GM23248 (cell line): ENCODE measurements at regions of chr16 and their contacts with region 1.

Region 1: DNA sequence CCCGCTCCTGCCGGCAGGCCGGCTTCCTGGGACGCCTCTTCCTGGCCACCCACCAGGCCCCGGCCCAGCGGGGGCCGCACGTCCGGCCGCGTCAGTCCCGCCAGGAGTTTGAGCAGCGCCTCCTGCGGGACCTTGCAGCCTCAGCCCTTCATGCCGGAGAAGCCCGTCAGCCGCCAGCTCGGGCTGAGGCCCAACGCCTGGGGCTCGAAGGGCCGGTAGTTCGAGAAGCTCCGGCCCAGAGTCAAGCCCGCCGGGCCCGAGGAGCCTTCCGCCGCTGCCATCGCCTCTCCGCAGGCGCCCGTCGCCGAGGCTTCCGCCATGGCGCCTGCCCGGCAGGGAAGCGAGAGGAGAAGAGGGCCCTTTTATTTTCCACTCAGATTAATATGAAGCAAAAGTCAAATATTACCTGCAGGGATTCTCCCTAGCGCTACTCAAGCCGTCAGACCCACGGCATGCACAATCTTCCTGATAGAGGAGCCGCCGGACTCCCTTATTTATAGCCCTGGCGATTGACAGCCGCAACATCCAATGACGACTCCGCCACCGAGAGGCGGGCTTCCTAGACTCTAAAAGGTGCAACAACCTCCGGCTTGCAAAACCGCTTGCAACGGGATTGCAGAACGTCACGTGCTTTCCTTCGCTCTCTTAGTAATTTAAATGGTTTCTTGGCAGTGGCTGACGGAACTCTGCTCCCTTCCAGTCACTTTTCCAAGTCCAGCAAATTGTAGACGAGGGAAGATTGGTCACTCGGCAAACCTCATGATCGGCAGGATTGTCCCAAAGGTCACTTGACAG is at the start of gene SEPHS2:
- DNase-seq: peak; percentile 98
- H3K4me3 ChIP-seq: peak within 1 kb of the TSS; percentile 98
- H3K27ac ChIP-seq: peak within 1 kb of the TSS; percentile 97
- H3K4me1 ChIP-seq: peaks cover 17% of the 10 kb centered on the region; the same call in 1 of the 2 replicates
- H3K27me3 ChIP-seq: no peaks in the 10 kb centered on the region
- total RNA-seq, gene SEPHS2: 6.2 and 6.4 TPM in 2 replicates

Region 2: DNA sequence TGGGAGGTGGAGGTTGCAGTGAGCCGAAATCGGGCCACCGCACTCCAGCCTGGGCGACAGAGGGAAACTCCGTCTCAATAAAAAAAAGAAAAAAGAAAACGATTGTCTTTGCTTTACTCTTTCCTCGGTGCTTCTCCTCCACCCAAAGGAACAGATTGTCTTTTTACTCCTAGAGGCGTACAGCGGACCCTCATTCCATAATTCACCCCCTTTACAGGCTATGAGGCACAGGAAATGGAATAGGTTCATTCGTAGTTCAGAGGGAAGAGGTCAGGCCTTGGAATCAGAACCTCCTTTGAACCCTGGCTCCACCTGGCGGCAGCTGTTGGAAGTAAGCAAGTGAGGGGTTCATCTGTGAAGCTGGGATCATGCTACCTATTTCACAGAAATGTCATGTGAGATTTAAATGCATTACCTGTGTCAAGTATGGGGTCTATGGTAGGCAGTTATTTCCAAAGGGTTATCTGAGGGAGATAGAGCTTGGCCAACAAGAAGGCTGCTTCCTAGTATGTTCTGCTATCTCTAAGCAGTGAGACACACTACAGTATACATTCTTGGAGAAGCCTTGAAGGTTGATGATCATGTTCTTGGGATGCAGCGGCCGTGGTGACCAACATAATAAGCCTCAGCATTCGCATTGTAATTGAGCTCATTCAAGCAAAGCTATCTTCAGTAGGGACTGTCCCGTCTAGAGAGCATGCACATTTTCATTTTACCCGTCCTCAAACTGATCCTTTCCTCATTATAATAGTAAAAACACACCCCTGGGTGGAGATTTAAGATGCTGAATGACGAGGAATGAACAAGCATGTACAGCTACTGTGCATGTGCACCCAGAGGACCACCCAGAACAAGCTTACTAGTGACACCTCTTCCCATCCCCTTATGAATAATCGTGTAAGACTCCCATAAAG is 183.3 kb after region 1 on chr16:
- in situ Hi-C with region 1: loop called (anchors 10 kb)
- DNase-seq: peak; percentile 72
- H3K4me3 ChIP-seq: peak overlapping the region; percentile 30
- H3K27ac ChIP-seq: no peak overlapping the region
- H3K4me1 ChIP-seq: no peaks in the 10 kb centered on the region
- H3K27me3 ChIP-seq: no peaks in the 10 kb centered on the region